Activated naive CD4-positive, alpha-beta T cell treated with anti-CD3 and anti-CD28 coated beads, Interleukin-2, amount 10 ng/mL, durations not matched to agents 7 days and 5 days (primary cell): ENCODE measurements at regions of chr12 and their contacts with region 1.

Region 1: DNA sequence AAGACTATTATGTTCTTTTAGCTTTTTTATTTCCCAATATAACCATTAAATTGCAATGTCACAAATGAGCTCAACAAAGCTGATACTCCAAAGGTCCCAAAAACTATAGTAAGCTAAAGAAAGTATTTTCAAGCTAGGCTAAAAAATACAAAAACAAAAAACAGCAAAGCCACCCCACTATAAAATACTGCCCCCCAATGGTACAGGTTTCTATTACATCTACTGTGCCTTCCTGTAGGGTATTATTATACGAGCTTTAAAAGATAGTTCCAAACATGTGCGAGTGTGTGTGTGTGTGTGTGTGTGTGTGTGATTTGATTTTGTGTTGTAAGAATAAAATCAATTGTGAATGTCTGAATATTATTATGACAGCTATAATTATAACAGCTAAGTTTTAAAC is 1.1 kb downstream of the IFNG start:
- DNase-seq: no peak
- H3K4me3 Mint-ChIP-seq: no peak overlapping the region
- H3K27ac Mint-ChIP-seq: no peak overlapping the region
- H3K4me1 Mint-ChIP-seq: peaks cover 25% of the 10 kb centered on the region
- H3K27me3 Mint-ChIP-seq: no peaks in the 10 kb centered on the region

Region 2: GRCh38 chr12:68040450-68041075 is 117.9 kb before region 1 on chr12:
- CTCF ChIA-PET with region 1: interaction called, 157 read pairs
- DNase-seq: peak; percentile 74
- H3K4me3 Mint-ChIP-seq: no peak overlapping the region
- H3K27ac Mint-ChIP-seq: no peak overlapping the region
- H3K4me1 Mint-ChIP-seq: peaks cover 21% of the 10 kb centered on the region
- H3K27me3 Mint-ChIP-seq: no peaks in the 10 kb centered on the region

Region 3: DNA sequence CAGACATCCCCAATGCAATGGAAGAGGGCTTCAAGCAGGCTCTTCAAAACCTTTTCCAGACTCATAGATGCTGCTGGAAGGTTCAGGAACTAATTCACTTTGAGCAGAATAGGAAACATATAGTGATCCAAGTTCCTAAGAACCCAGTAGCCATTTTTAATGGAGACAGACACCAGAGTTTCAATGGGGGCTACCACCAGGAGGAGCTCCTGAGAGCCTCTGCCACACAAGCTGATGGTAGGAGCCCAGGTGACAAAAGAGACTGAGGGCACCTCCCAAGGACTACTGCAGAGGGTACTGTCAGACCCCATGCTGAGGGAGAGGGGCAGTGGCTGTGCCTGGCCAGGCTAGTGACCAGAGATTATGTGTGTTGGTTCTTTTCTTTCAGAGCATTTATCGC is 44.8 kb before region 1 on chr12:
- CTCF ChIA-PET with region 1: interaction called, 95 read pairs
- DNase-seq: peak; percentile 58
- H3K4me3 Mint-ChIP-seq: no peak overlapping the region
- H3K27ac Mint-ChIP-seq: no peak overlapping the region
- H3K4me1 Mint-ChIP-seq: peaks cover 17% of the 10 kb centered on the region
- H3K27me3 Mint-ChIP-seq: no peaks in the 10 kb centered on the region

Region 4: GRCh38 chr12:68119724-68120211 is 38.7 kb before region 1 on chr12:
- CTCF ChIA-PET with region 1: interaction called, 95 read pairs
- DNase-seq: peak; percentile 58
- H3K4me3 Mint-ChIP-seq: no peak overlapping the region
- H3K27ac Mint-ChIP-seq: peak overlapping the region; percentile 77
- H3K4me1 Mint-ChIP-seq: peaks cover 24% of the 10 kb centered on the region
- H3K27me3 Mint-ChIP-seq: no peaks in the 10 kb centered on the region

Region 5: DNA sequence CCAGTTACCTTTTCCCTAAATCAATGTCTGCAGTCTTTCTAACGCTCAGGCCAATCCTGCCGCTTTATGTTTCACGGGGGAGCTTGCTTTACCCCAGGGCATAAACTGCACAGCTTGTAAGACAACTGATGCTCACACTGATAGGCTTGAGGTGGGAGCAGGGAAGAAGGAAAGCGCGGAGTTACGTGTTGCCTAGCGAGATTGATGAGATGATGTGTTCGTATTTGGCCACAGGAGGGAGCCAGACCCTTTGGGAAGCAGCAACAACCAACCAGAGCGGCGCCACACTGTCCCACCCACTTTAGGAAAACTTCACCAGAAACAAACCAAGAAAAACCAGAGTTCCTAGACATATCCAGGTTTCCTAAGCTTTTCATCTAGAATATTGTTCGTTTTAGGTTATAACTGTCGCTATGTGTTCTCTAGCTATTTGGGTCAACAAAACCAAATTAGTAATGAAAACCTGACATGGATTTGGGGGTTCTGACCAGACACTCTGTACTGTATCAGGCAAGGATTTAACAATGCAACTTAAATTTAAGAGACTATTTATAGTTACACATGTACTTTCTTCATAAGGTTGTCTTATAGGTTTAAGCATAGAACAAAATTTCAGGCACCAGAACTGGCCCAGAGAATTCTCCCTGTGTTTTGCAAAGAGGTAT is 64.8 kb after region 1 on chr12:
- CTCF ChIA-PET with region 1: interaction called, 19 read pairs
- DNase-seq: peak; percentile 81
- H3K4me3 Mint-ChIP-seq: no peak overlapping the region
- H3K27ac Mint-ChIP-seq: no peak overlapping the region
- H3K4me1 Mint-ChIP-seq: peaks cover 10% of the 10 kb centered on the region
- H3K27me3 Mint-ChIP-seq: peaks cover 5% of the 10 kb centered on the region